GM12878 (cell line): ENCODE measurements at regions of chr1 and their contacts with region 1.

Region 1: GRCh38 chr1:110780600-110781484 is 92.1 kb upstream of the CD53 start:
- DNase-seq: no peak
- ATAC-seq: peak; percentile 81
- H3K4me3 ChIP-seq: no peak overlapping the region
- H3K27ac ChIP-seq: no peak overlapping the region
- H3K4me1 ChIP-seq: peaks cover 5% of the 10 kb centered on the region
- H3K27me3 ChIP-seq: no peaks in the 10 kb centered on the region
- CTCF ChIP-seq: peak; percentile 74 to 87 (median 83)
- EP300 ChIP-seq: no peak
- POLR2A ChIP-seq: no peak
- RAD21 ChIP-seq: peak; percentile 90

Region 2: GRCh38 chr1:110412576-110412975 is 368.3 kb before region 1 on chr1:
- CTCF ChIA-PET with region 1: no interaction called
- POLR2A ChIA-PET with region 1: no interaction called
- RAD21 ChIA-PET with region 1: no interaction called
- SMC1A ChIA-PET with region 1: no interaction called
- in situ Hi-C with region 1: no loop called
- intact Hi-C with region 1: loop called (anchors 10 kb)
- DNase-seq: peak; percentile 24
- ATAC-seq: peak; percentile 88
- H3K4me3 ChIP-seq: no peak overlapping the region
- H3K27ac ChIP-seq: no peak overlapping the region
- H3K4me1 ChIP-seq: peaks cover 6% of the 10 kb centered on the region
- H3K27me3 ChIP-seq: peaks cover 0 to 2% of the 10 kb centered on the region in 2 experiments; a peak in 2 of 4 replicates
- CTCF ChIP-seq: peak; percentile 80 to 83 (median 83)
- EP300 ChIP-seq: no peak
- POLR2A ChIP-seq: no peak
- RAD21 ChIP-seq: peak; percentile 86

Region 3: GRCh38 chr1:110554871-110555801 is 225.7 kb before region 1 on chr1:
- CTCF ChIA-PET with region 1: interaction called, 4 read pairs
- POLR2A ChIA-PET with region 1: no interaction called
- RAD21 ChIA-PET with region 1: interaction called, 3 read pairs
- SMC1A ChIA-PET with region 1: no interaction called
- in situ Hi-C with region 1: no loop called
- intact Hi-C with region 1: loop called (anchors 1 kb)
- DNase-seq: no peak
- ATAC-seq: peak; percentile 94
- H3K4me3 ChIP-seq: no peak overlapping the region
- H3K27ac ChIP-seq: no peak overlapping the region
- H3K4me1 ChIP-seq: no peaks in the 10 kb centered on the region
- H3K27me3 ChIP-seq: peaks cover 13 to 28% of the 10 kb centered on the region in 2 experiments
- CTCF ChIP-seq: peak; percentile 54 to 74 (median 58)
- EP300 ChIP-seq: no peak
- POLR2A ChIP-seq: no peak
- RAD21 ChIP-seq: 0 out of 2 replicates have a peak, but pooled peaks have one; percentile 23

Region 4: DNA sequence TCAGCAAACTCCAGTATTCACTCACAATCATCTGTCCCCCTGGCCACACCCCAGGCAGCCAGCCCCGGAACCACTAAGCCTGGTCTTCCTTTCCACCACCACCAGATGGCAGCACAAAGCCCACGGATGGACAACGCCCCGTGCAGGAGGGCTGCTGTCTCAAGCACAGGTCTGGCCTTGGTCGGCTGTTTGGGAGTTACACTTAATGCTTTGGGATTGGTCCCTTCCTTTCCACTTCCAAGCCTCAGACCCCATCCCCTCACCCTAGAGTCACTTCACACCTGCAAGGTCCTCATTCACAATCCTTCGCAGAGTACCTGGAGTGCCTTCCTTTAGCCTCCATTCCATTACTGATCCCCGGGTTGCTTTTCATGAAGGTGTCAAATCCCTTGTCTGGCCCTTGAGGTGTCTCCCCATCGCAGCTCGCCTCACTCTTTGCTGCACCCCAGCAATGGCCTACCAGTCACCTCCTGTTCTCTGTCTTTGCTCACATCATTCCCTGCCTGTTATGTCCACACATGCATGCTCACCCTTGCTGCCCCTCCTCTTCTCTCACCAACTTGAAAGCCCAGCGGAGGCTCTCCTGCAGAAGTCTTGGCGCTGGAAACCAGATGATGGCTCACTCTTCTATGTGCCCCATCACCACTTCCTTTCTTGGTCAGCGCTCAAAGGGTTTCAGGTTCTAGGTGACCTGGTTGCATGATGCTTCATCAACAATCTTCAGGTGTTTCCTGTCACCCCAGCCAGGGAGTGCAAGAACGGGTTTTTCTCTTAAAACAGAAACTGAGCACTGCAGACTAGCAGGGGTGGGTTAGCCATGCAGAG is 149.8 kb before region 1 on chr1:
- CTCF ChIA-PET with region 1: interaction called, 16 read pairs
- POLR2A ChIA-PET with region 1: no interaction called
- RAD21 ChIA-PET with region 1: interaction called, 7 read pairs
- SMC1A ChIA-PET with region 1: interaction called, 19 read pairs
- in situ Hi-C with region 1: no loop called
- intact Hi-C with region 1: loop called (anchors 5 kb)
- DNase-seq: peak; percentile 84
- ATAC-seq: peak; percentile 85
- H3K4me3 ChIP-seq: peak overlapping the region; percentile 10; the same call in 1 of the 2 replicates
- H3K27ac ChIP-seq: peak overlapping the region; percentile 66
- H3K4me1 ChIP-seq: peaks cover 67% of the 10 kb centered on the region
- H3K27me3 ChIP-seq: no peaks in the 10 kb centered on the region
- CTCF ChIP-seq: peak; percentile 84 to 89 (median 86)
- EP300 ChIP-seq: no peak
- POLR2A ChIP-seq: no peak
- RAD21 ChIP-seq: peak; percentile 94

Region 5: DNA sequence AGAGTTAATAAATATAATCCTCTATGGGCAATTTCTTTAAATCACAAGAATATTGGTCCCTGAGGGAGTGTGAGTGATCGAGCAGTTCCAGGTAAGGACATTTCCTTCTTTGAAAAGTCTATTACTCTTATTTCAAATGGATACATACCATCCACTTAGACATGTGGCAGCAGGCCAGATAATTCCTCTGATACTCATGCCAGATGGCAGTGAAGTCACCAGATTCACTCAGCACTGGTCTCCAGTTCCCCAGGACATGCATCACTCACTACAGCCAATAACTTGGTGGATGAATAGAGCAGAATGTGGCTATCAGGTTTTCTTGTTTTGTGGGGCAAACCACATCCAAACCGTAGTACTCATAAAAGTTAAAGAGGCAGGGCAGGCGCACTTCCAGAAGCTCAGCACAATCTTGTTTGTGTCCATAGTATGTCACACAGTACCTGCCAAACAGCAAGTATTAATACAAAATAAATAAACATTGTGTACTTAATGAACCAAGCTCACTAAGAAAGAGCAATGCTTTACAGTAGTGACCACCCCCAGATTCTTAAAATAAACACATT is 17.9 kb after region 1 on chr1:
- CTCF ChIA-PET with region 1: interaction called, 12 read pairs
- POLR2A ChIA-PET with region 1: no interaction called
- RAD21 ChIA-PET with region 1: interaction called, 3 read pairs
- SMC1A ChIA-PET with region 1: interaction called, 6 read pairs
- in situ Hi-C with region 1: no loop called
- intact Hi-C with region 1: no loop called
- DNase-seq: no peak
- ATAC-seq: no peak
- H3K4me3 ChIP-seq: no peak overlapping the region
- H3K27ac ChIP-seq: no peak overlapping the region
- H3K4me1 ChIP-seq: no peaks in the 10 kb centered on the region
- H3K27me3 ChIP-seq: no peaks in the 10 kb centered on the region
- CTCF ChIP-seq: no peak
- EP300 ChIP-seq: no peak
- POLR2A ChIP-seq: no peak
- RAD21 ChIP-seq: no peak

Region 6: DNA sequence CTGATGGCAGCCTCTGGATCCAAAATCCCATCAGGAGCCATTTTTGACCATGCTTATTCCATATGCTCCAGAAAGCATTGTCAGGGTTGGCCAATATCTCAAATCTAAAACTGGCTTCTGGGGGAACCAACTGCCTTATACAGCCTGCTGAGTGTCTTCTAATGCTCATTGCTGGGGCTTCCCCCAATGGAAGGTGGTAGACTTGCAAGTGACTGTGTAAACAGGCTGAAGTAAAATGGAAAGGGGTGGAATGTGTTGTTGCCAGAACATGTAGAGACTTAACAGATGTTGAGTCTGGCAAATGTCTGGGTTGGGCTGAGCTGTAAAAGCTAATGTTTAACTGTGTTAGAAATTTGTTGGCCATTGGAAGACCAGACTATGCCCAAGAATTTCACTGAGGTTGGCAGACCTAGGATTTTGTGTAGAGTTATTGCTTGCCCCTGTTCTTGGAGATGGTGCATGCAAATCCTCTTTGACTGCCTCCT is 205.6 kb after region 1 on chr1:
- CTCF ChIA-PET with region 1: interaction called, 68 read pairs
- POLR2A ChIA-PET with region 1: no interaction called
- RAD21 ChIA-PET with region 1: no interaction called
- SMC1A ChIA-PET with region 1: interaction called, 23 read pairs
- in situ Hi-C with region 1: loop called (anchors 5 kb)
- intact Hi-C with region 1: no loop called
- DNase-seq: no peak
- ATAC-seq: no peak
- H3K4me3 ChIP-seq: no peak overlapping the region
- H3K27ac ChIP-seq: no peak overlapping the region
- H3K4me1 ChIP-seq: no peaks in the 10 kb centered on the region
- H3K27me3 ChIP-seq: no peaks in the 10 kb centered on the region
- CTCF ChIP-seq: no peak
- EP300 ChIP-seq: no peak
- POLR2A ChIP-seq: no peak
- RAD21 ChIP-seq: no peak

Region 7: DNA sequence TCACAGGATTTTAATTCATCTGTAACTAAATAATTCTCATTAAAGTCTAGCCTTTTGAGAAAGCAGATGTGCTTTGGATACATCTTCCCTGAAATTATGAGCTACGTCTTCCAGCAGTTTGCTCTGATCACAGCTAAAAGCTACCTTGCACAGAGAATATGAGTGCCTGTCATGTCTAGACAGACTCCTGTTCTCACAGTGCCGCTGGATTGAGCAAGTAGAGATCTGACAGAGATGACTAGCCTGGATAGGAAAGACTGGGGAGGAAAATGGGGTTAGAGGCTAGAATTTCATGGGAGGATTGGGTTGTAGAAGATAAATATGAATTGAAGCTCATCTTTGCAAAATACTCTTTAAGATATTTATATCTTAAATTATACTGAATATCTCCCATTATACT is 383.3 kb after region 1 on chr1:
- CTCF ChIA-PET with region 1: no interaction called
- POLR2A ChIA-PET with region 1: no interaction called
- RAD21 ChIA-PET with region 1: no interaction called
- SMC1A ChIA-PET with region 1: no interaction called
- in situ Hi-C with region 1: no loop called
- intact Hi-C with region 1: no loop called
- DNase-seq: no peak
- ATAC-seq: no peak
- H3K4me3 ChIP-seq: no peak overlapping the region
- H3K27ac ChIP-seq: no peak overlapping the region
- H3K4me1 ChIP-seq: no peaks in the 10 kb centered on the region
- H3K27me3 ChIP-seq: no peaks in the 10 kb centered on the region
- CTCF ChIP-seq: no peak
- EP300 ChIP-seq: no peak
- POLR2A ChIP-seq: no peak
- RAD21 ChIP-seq: no peak